ENCODE measurements at regions of chr9 and their contacts with region 1.

Region 1: DNA sequence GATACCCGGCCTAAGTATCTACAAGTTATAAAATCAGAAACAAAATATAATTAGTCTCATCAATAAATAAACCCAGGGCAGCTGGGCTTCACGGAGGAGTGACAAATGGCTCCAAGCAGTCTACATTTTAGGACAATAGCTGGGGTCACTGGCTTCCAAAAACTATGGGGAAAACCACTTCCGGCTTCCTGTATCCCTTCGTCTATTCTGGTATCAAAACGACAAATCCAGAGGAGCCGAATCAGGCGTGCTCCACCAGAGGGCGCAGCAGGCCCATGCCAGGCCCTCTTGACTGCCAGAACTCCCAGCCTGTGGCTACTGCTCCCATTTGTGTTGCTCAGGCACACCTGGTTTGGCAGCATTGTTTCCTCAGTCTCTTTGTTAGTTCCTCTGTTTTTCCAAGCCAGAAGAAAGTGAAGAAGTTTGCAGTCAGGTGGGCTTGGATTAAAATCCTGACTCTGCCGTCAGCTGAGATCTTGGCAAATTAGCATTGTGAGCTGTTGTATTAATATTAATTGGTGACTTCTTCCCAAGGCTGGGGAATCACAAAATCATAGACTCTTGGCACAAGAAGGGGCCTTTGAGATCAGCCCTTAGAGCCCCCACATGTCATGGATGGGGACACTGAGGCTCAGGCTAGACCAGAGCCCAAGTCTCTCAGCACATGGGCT is 11.6 kb upstream of the RAB14 start:
- DNase-seq: peak; percentile 86 to 88
- ATAC-seq: peak; percentile 94 to 99
- H3K4me3 ChIP-seq: no peak overlapping the region
- H3K27ac ChIP-seq: peak overlapping the region; percentile 12 to 74
- H3K4me1 ChIP-seq: no peaks in the 10 kb centered on the region
- CTCF ChIP-seq: peak; percentile 95
- EP300 ChIP-seq: no peak
- POLR2A ChIP-seq: no peak
- RAD21 ChIP-seq: peak; percentile 97

Region 2: GRCh38 chr9:121201738-121202533 is 11.3 kb before region 1 on chr9 and contains the start of gene RAB14:
- CTCF ChIA-PET with region 1: interaction called, 26 read pairs
- POLR2A ChIA-PET with region 1: interaction called, 3 read pairs
- DNase-seq: peak; percentile 98 to 99
- ATAC-seq: peak; percentile 93 to 96
- H3K4me3 ChIP-seq: peak within 1 kb of the TSS; percentile 89
- H3K27ac ChIP-seq: peak within 1 kb of the TSS; percentile 88 to 97
- H3K4me1 ChIP-seq: peaks cover 34% of the 10 kb centered on the region
- CTCF ChIP-seq: peak; percentile 53
- EP300 ChIP-seq: no peak
- POLR2A ChIP-seq: peak; percentile 71
- RAD21 ChIP-seq: 0 out of 5 replicates have a peak, but pooled peaks of 1 of the 2 experiments have one; percentile 14
- polyA plus RNA-seq, gene RAB14: 54.1 and 55.7 TPM in 2 replicates

Region 3: GRCh38 chr9:121253821-121254471 is 40.7 kb after region 1 on chr9:
- CTCF ChIA-PET with region 1: interaction called, 15 read pairs
- POLR2A ChIA-PET with region 1: no interaction called
- DNase-seq: no peak
- ATAC-seq: no peak
- H3K4me3 ChIP-seq: no peak overlapping the region
- H3K27ac ChIP-seq: no peak overlapping the region
- H3K4me1 ChIP-seq: no peaks in the 10 kb centered on the region
- CTCF ChIP-seq: no peak
- EP300 ChIP-seq: no peak
- POLR2A ChIP-seq: no peak
- RAD21 ChIP-seq: no peak

Region 4: GRCh38 chr9:121286973-121287741 is 73.9 kb after region 1 on chr9:
- CTCF ChIA-PET with region 1: interaction called, 40 read pairs
- POLR2A ChIA-PET with region 1: no interaction called
- DNase-seq: peak; percentile 96 to 97
- ATAC-seq: peak; percentile 90 to 92
- H3K4me3 ChIP-seq: no peak overlapping the region
- H3K27ac ChIP-seq: peak overlapping the region; percentile 92 to 93
- H3K4me1 ChIP-seq: peaks cover 61% of the 10 kb centered on the region
- CTCF ChIP-seq: peak; percentile 35; the same call in 1 of the 3 replicates
- EP300 ChIP-seq: peak in 1 of 2 experiments; percentile 45; a peak in 2 of 5 replicates
- POLR2A ChIP-seq: no peak; the same call in 1 of the 2 replicates
- RAD21 ChIP-seq: peak in 1 of 2 experiments; percentile 44; a peak in 3 of 5 replicates

Region 5: DNA sequence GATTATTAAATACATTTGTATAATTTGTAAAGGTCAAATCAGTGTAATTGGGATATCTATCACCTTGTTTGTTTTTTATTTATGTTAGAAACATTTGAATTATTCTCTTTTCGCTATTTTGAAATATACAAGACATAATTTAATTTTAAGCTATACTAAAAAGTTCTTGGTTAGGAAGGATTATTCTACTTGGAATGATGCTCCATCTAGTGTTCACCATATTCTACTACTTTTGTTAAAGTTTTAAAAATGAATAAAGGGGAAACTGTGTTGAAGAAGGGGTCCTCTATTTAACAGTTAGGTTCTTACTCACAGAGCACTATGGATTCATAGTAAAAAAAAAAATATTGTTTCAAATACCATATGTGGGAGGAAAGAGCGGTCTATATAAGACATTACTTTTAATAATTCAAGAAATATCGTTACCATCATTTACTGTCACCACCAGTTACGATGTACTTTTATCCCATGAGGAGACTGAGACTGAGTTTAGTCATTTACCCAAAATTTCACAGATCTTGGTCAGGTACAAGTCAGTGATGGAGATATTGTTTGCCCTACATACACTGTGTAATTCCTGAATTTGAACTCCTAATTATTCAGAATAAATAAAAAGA is 163.1 kb after region 1 on chr9:
- CTCF ChIA-PET with region 1: interaction called, 19 read pairs
- POLR2A ChIA-PET with region 1: no interaction called
- DNase-seq: no peak
- ATAC-seq: no peak
- H3K4me3 ChIP-seq: no peak overlapping the region
- H3K27ac ChIP-seq: peak overlapping the region in 1 of 2 experiments; percentile 94; a peak in 2 of 6 replicates
- H3K4me1 ChIP-seq: peaks cover 45% of the 10 kb centered on the region
- CTCF ChIP-seq: peak; percentile 52
- EP300 ChIP-seq: no peak
- POLR2A ChIP-seq: no peak
- RAD21 ChIP-seq: peak; percentile 72 to 79

Region 6: DNA sequence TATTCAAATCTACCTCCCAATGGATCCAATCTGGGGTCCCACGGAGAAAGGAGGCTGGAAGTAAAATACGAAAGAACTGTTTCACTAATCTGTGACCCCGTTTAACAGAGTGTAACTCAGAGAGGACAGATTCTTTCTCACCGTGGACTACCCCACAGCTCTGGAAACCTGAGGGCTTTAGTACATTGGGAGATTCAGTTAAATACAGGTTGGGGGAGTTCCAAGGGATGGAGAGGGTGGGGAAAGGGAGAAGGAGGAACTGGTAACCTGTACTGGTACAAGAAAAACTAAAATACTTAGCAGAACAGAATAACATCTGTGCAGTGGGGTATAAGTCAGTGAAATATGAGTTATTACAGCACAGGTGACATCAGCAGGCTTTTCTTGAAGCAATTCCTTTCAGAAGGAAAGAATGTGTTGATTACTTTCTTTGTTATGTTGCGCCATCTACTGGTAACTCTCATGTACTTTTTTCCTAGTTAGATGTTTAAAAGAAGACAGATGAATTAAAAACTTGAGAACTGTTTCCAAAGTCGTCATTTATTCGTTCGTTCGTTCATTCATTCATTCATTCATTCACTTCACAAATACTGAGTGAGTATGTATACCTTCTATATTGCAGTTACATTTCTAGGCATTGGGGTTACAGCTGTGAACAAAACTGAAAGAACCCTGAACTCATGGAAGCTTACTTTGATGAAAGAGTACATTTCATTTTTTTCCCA is 186.8 kb after region 1 on chr9:
- CTCF ChIA-PET with region 1: interaction called, 123 read pairs
- POLR2A ChIA-PET with region 1: interaction called, 3 read pairs
- DNase-seq: peak; percentile 40 to 80
- ATAC-seq: peak; percentile 82 to 89
- H3K4me3 ChIP-seq: no peak overlapping the region
- H3K27ac ChIP-seq: peak overlapping the region; percentile 39 to 55; a peak in 5 of 6 replicates
- H3K4me1 ChIP-seq: peaks cover 8% of the 10 kb centered on the region; the same call in 2 of the 3 replicates
- CTCF ChIP-seq: peak; percentile 86
- EP300 ChIP-seq: no peak
- POLR2A ChIP-seq: no peak
- RAD21 ChIP-seq: peak; percentile 89 to 92

Measured in A549 (cell line).